Right ventricle myocardium superior (tissue), 1 donor: ENCODE measurements at regions of chr1 and their contacts with region 1.

Region 1: DNA sequence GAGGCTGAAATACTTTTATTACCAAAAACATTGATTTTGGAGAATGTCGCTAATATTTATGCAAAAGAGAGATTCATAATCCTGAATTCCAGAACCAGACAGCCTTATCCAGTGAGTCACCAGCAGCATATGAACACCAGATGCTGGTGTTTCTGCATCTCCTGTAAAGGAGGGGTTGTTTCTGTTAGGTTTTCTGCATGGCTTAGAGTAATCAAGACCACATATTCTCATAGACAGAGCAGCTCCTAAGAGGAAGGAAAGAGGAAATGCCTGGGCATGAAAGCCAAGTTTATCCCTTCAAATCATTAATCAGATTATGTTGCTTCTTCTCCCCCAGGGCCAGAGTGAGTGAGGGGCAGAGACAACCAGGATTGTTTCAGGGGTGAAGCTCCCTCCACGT is 86.2 kb downstream of the NGF start:
- DNase-seq: no peak
- ATAC-seq: peak; percentile 88

Region 2: GRCh38 chr1:115189814-115190539 is 61.9 kb before region 1 on chr1:
- intact Hi-C with region 1: loop called (anchors 10 kb)
- DNase-seq: no peak
- ATAC-seq: peak; percentile 52